Calu3 (cell line): ENCODE measurements at regions of chr12 and their contacts with region 1.

Region 1: DNA sequence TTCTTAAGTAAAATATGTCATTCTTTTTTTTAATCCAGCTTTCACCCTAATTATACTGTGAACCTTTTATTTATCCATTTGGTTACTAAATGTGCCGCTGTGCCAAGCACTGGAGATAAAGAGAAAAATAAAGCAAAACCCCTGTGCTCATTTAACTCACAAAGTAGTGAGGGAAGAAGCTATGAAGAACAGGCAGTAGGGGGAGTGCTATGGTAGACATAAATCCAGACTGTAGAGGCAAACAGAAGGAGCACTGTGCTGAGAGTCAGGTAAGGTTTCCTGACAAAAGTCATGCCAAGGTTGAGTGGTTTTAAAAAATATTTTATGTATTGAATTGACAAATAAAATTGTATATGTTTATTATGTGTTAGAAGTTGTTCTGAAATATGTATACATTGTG is 188.5 kb upstream of the SYT10 start:
- DNase-seq: no peak
- H3K4me3 Mint-ChIP-seq: no peak overlapping the region
- H3K27ac Mint-ChIP-seq: no peak overlapping the region
- H3K4me1 Mint-ChIP-seq: no peaks in the 10 kb centered on the region
- H3K27me3 Mint-ChIP-seq: no peaks in the 10 kb centered on the region
- CTCF ChIP-seq: no peak

Region 2: GRCh38 chr12:33942172-33942571 is 314.1 kb after region 1 on chr12:
- CTCF ChIA-PET with region 1: no interaction called
- intact Hi-C with region 1: loop called (anchors 10 kb)
- DNase-seq: no peak
- H3K4me3 Mint-ChIP-seq: no peak overlapping the region
- H3K27ac Mint-ChIP-seq: no peak overlapping the region
- H3K4me1 Mint-ChIP-seq: peaks cover 13% of the 10 kb centered on the region
- H3K27me3 Mint-ChIP-seq: no peaks in the 10 kb centered on the region
- CTCF ChIP-seq: peak; percentile 33

Region 3: GRCh38 chr12:34022079-34022830 is 394.2 kb after region 1 on chr12 and contains the start of gene ALG10:
- CTCF ChIA-PET with region 1: no interaction called
- intact Hi-C with region 1: loop called (anchors 10 kb)
- DNase-seq: peak; percentile 96
- H3K4me3 Mint-ChIP-seq: peak within 1 kb of the TSS; percentile 88
- H3K27ac Mint-ChIP-seq: peak within 1 kb of the TSS; percentile 90
- H3K4me1 Mint-ChIP-seq: no peaks in the 10 kb centered on the region
- H3K27me3 Mint-ChIP-seq: no peaks in the 10 kb centered on the region
- CTCF ChIP-seq: peak; percentile 42
- total RNA-seq, gene ALG10: 16.4 and 17.4 TPM in 2 replicates